CD14-positive monocyte (primary cell): ENCODE measurements at regions of chr1 and their contacts with region 1.

Region 1: GRCh38 chr1:244353551-244354091 is 98.1 kb downstream of the ADSS2 start:
- DNase-seq: peak; percentile 86 to 99 (median 97)
- H3K4me3 ChIP-seq: peak overlapping the region in 1 of 3 experiments; percentile 11
- H3K4me3 Mint-ChIP-seq: no peak overlapping the region
- H3K27ac ChIP-seq: peak overlapping the region; percentile 39 to 54
- H3K27ac Mint-ChIP-seq: peak overlapping the region; percentile 78 to 96 (median 87)
- H3K4me1 ChIP-seq: peaks cover 40 to 44% of the 10 kb centered on the region in 2 donors
- H3K4me1 Mint-ChIP-seq: peaks cover 47% of the 10 kb centered on the region
- H3K27me3 ChIP-seq: no peaks in the 10 kb centered on the region
- H3K27me3 Mint-ChIP-seq: peaks cover 0 to 1% (median 0%) of the 10 kb centered on the region in 3 donors
- CTCF ChIP-seq: no peak

Region 2: DNA sequence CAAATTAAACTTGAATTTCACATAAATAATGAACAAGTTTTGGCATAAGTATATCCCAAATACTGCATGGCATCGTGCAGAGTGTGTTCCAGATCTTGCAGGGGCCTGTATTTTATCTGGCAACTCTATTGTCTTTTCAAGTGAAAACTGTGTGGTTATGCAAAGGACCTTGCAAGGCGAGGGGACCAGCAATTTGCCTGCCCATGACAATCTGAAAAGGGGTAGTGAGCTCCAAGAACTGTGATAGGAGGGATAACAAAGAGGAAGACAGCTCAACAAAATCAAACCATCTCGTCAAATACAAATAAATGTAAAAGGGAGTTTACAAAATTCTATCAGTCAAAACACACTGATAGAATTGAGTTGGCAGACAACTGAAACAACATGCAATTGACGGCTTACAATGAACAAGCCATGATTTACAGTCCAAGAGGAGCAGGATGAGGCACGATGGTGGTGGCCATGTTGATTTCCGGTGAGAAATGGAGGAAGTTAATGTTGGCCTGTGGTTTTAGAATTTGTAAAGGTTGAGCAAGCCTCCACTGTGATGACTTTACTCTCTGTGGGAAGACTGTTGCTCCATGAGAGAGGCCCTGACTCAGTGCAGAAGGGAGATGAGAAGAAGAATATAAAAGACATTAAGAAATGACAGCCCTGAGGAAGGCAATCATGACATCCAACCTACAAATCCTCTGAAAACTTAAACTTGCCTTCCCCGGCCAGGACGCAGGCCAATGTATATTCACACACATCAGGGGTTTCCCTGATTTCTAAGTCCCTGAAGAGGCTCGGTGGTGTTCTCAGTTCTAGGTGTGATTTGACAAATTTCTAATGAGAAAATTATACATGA is 34.1 kb before region 1 on chr1:
- intact Hi-C with region 1: loop called in 1 of 2 experiments (anchors 5 kb)
- DNase-seq: peak; percentile 94 to 98 (median 97)
- H3K4me3 ChIP-seq: peak overlapping the region in 2 of 3 experiments; percentile 26 to 43
- H3K4me3 Mint-ChIP-seq: peak overlapping the region; percentile 51 to 81
- H3K27ac ChIP-seq: peak overlapping the region; percentile 97 to 99
- H3K27ac Mint-ChIP-seq: peak overlapping the region; percentile 96 to 100 (median 99)
- H3K4me1 ChIP-seq: peaks cover 64 to 67% of the 10 kb centered on the region in 2 donors
- H3K4me1 Mint-ChIP-seq: peaks cover 66% of the 10 kb centered on the region
- H3K27me3 ChIP-seq: no peaks in the 10 kb centered on the region
- H3K27me3 Mint-ChIP-seq: no peaks in the 10 kb centered on the region
- CTCF ChIP-seq: no peak

Region 3: GRCh38 chr1:244371242-244372141 is 17.9 kb after region 1 on chr1:
- intact Hi-C with region 1: no loop called
- DNase-seq: no peak
- H3K4me3 ChIP-seq: no peak overlapping the region
- H3K4me3 Mint-ChIP-seq: no peak overlapping the region
- H3K27ac ChIP-seq: no peak overlapping the region
- H3K27ac Mint-ChIP-seq: peak overlapping the region in 1 of 7 donors; percentile 7
- H3K4me1 ChIP-seq: peaks cover 6 to 21% of the 10 kb centered on the region in 2 donors
- H3K4me1 Mint-ChIP-seq: peaks cover 26% of the 10 kb centered on the region
- H3K27me3 ChIP-seq: no peaks in the 10 kb centered on the region
- H3K27me3 Mint-ChIP-seq: peaks cover 0 to 3% (median 3%) of the 10 kb centered on the region in 3 donors
- CTCF ChIP-seq: no peak

Region 4: GRCh38 chr1:244409701-244410100 is 56.1 kb after region 1 on chr1:
- intact Hi-C with region 1: no loop called
- DNase-seq: peak; percentile 32 to 73 (median 50)
- H3K4me3 ChIP-seq: no peak overlapping the region
- H3K4me3 Mint-ChIP-seq: peak overlapping the region in 1 of 2 donors; percentile 28
- H3K27ac ChIP-seq: peak overlapping the region in 1 of 2 donors; percentile 79
- H3K27ac Mint-ChIP-seq: peak overlapping the region; percentile 54 to 89 (median 63)
- H3K4me1 ChIP-seq: peaks cover 16% of the 10 kb centered on the region in 2 donors
- H3K4me1 Mint-ChIP-seq: peaks cover 15% of the 10 kb centered on the region
- H3K27me3 ChIP-seq: no peaks in the 10 kb centered on the region
- H3K27me3 Mint-ChIP-seq: no peaks in the 10 kb centered on the region
- CTCF ChIP-seq: no peak